ENCODE measurements at regions of chr19 and their contacts with region 1.

Region 1: GRCh38 chr19:1652471-1653299 is at the start of gene TCF3:
- DNase-seq: peak; percentile 99
- ATAC-seq: peak; percentile 98 to 99 (median 99)
- H3K4me3 ChIP-seq: peak within 1 kb of the TSS; percentile 90
- H3K27ac ChIP-seq: peak within 1 kb of the TSS; percentile 100
- H3K4me1 ChIP-seq: peaks cover 12% of the 10 kb centered on the region
- H3K27me3 ChIP-seq: peaks cover 0 to 3% (median 3%) of the 10 kb centered on the region in 3 donors
- CTCF ChIP-seq: no peak
- total RNA-seq, gene TCF3: 20.1 to 26.7 (median 23.0) TPM

Region 2: DNA sequence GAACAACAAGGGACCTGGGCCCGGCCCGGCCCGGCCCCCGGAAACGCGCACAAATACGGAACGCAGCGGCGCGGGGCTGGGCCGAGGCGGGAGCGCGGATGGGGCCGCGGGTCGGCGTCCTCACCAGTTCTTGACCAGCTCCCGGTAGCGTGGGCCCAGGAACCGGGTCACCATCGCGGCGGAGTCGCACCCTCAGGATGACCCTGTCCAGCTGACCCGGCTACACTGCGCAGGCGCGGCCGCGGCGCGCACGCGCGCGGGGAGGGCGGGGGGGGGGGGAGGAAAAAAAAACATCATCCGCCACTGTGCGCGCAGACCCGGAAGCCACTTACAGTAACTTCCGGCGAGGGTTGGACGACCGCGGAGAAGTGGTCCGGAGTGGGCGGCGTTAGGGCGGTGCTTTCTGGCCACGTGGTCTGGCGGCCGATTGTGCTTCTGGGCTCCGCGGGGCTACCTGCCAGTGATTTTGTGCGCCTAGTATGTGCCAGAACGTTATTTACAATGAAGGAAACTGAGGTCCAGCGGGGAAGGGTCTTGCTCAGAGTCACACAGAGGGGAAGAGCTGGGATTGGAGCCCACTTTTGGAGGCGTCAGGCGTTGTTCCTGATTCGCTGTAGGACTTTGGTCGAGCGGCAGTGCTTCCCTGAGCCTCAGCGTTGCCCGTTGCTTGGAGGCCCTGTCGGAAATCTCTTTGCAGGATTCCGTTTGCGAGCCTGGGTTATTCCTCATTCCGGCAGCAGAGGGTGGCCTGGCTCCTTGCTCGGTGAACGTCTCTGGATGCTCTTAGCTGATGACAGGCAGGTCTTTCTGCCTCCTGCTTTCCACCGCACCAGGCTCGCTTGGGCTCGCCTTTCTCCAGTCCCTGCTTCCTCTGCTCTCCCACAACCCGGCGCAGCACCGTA is 47.2 kb before region 1 on chr19 and contains the start of gene UQCR11:
- intact Hi-C with region 1: loop called (anchors 2 to 5 kb)
- DNase-seq: peak; percentile 95 to 97
- ATAC-seq: peak; percentile 94 to 95 (median 94)
- H3K4me3 ChIP-seq: peak within 1 kb of the TSS; percentile 94
- H3K27ac ChIP-seq: peak within 1 kb of the TSS; percentile 93
- H3K4me1 ChIP-seq: peaks cover 32% of the 10 kb centered on the region
- H3K27me3 ChIP-seq: no peaks in the 10 kb centered on the region
- CTCF ChIP-seq: peak; percentile 52
- total RNA-seq, gene UQCR11: 408 to 534 (median 501) TPM

Region 3: GRCh38 chr19:1610579-1610978 is 42.1 kb before region 1 on chr19:
- intact Hi-C with region 1: loop called (anchors 2 to 5 kb)
- DNase-seq: no peak
- ATAC-seq: no peak
- H3K4me3 ChIP-seq: no peak overlapping the region
- H3K27ac ChIP-seq: no peak overlapping the region
- H3K4me1 ChIP-seq: peaks cover 6% of the 10 kb centered on the region
- H3K27me3 ChIP-seq: no peaks in the 10 kb centered on the region
- CTCF ChIP-seq: no peak

Measured in psoas muscle (tissue), 8 donors.